Common myeloid progenitor, CD34-positive (primary cell): ENCODE measurements at regions of chr20 and their contacts with region 1.

Region 1: DNA sequence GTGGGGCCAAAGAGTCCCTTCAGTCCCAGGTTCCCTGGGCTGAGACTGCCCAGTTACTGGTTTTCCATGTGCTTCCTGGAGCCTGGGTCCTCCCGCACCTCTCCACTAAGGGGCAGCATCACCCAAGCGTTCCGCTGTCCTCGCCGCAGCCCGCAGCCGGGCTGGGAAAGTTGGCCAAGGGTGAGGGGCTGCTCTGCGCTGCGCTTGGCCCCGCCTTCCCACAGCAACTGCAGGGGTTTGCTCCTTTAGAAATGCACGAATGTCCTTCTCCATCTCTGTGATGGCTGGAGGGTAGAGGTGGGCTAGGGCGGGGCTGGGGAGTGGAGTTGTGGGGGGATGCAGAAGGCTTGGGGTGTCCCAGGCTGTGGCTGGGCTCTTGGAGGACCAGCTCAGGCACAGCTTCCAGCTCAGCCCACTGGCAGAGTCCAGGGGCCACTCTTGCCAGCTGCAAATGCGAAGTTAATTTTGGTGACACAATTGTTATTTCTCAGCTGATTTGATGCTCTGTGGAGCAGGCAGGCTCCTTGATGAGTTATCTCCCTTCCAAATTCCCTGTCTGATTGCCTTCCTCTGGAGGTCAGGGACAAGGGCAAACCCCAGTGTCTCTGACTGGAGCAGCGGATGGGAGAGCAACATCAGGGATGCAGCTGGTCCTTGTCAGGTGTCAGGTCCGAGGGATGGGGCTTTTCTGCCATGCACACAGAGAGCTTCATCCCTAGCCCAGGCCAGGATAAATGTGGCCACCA is 63.2 kb downstream of the NOL4L start:
- DNase-seq: peak in 2 of 3 donors; percentile 69 to 77
- H3K4me3 ChIP-seq: no peak overlapping the region
- H3K27ac ChIP-seq: no peak overlapping the region
- H3K4me1 ChIP-seq: peaks cover 0 to 72% (median 69%) of the 10 kb centered on the region in 4 experiments
- H3K27me3 ChIP-seq: no peaks in the 10 kb centered on the region

Region 2: DNA sequence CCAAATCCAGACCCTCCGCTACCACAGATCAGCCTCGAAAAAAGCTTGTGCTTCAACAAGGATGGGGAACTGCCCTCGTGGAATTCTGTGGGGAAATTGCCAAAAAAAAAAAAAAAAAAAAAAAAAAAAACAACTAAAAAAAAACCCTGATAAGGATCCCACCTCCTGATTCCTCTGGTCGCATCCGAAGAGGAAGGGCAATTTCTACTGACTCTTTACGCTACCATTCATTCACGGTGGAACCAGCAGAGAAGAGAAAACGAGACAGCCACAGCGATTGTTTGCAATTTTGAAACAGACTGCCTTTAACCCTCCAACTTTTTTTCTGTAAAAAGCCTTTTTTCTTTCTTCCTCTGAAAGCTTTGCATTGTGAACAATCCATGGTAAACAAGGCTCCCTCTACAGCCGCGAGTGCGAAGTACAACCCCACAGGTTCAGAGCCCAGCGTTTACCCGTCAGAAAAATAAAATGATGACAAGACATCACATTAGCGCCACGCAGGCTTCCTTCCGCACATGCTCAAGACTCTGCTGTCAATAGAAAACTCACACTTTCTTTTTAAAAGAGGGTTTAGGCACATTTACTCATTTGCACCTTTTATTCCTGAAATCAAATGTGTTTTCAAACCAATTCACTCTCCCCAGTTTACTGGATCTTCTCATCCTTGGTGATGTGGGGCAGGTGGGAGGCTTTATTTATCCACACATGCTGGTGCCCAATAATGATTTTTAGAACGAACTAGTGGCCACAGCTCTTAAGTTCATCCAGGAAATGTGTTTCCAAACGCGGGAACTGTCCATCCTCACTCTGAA is 36.8 kb before region 1 on chr20:
- CTCF ChIA-PET with region 1: interaction called, 11 read pairs
- POLR2A ChIA-PET with region 1: no interaction called
- DNase-seq: peak; percentile 84 to 93 (median 93)
- H3K4me3 ChIP-seq: peak overlapping the region; percentile 28 to 78 (median 65)
- H3K27ac ChIP-seq: peak overlapping the region in 1 of 2 experiments; percentile 49
- H3K4me1 ChIP-seq: peaks cover 0 to 44% (median 41%) of the 10 kb centered on the region in 4 experiments
- H3K27me3 ChIP-seq: no peaks in the 10 kb centered on the region

Region 3: GRCh38 chr20:32535953-32536823 is 14.2 kb after region 1 on chr20:
- CTCF ChIA-PET with region 1: interaction called, 255 read pairs
- POLR2A ChIA-PET with region 1: interaction called, 6 read pairs
- DNase-seq: peak in 2 of 3 donors; percentile 82 to 88
- H3K4me3 ChIP-seq: peak overlapping the region; percentile 27 to 73 (median 62)
- H3K27ac ChIP-seq: peak overlapping the region in 1 of 2 experiments; percentile 70
- H3K4me1 ChIP-seq: peaks cover 19 to 89% (median 79%) of the 10 kb centered on the region in 4 experiments
- H3K27me3 ChIP-seq: no peaks in the 10 kb centered on the region

Region 4: GRCh38 chr20:32574296-32575226 is 52.6 kb after region 1 on chr20:
- CTCF ChIA-PET with region 1: interaction called, 12 read pairs
- POLR2A ChIA-PET with region 1: no interaction called
- DNase-seq: peak; percentile 83 to 94 (median 94)
- H3K4me3 ChIP-seq: peak overlapping the region in 2 of 7 experiments; percentile 2 to 28
- H3K27ac ChIP-seq: peak overlapping the region in 1 of 2 experiments; percentile 56
- H3K4me1 ChIP-seq: peaks cover 0 to 92% (median 53%) of the 10 kb centered on the region in 4 experiments
- H3K27me3 ChIP-seq: no peaks in the 10 kb centered on the region

Region 5: DNA sequence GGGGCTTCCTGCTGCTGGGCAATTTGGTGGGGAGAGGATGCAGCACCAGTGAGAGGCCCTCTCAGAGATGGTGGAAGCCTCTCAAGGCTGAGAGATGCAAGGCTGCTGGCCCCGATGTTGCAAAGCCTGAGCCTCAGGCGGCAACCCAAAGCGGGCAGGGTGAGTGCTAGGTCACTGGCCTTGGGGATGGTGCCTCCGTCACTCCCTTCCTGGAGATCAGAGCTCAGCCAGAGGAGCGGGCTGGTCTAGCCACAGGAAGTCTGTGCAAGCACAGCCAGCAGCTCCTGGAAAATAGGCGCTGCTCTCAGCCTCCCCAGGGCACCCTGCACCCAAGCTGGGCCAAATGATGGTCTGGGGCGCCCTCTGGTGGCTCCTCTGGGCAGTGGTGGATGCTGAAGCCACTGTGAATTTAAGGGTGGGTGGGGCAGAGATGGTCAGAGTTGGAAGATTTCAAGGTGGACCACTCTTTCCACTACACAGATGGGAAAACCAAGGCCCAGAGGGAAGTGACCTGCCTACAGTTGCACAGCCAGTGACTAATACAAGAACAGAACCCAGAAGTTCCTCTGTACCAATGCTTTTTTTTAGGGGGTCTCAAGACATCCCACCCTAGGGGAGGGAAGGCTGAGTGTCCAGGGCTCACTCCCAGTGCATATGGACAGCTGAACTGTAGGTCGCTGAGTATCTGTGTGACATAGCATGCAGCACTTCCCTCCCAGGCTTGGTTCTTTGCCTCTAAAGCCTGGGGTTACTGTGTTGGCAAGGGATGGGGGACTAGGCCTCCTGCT is 131.0 kb after region 1 on chr20:
- CTCF ChIA-PET with region 1: interaction called, 669 read pairs
- POLR2A ChIA-PET with region 1: interaction called, 6 read pairs
- DNase-seq: peak; percentile 69 to 84 (median 80)
- H3K4me3 ChIP-seq: peak overlapping the region in 3 of 7 experiments; percentile 23 to 38 (median 33)
- H3K27ac ChIP-seq: no peak overlapping the region
- H3K4me1 ChIP-seq: peaks cover 3 to 55% (median 39%) of the 10 kb centered on the region in 4 experiments
- H3K27me3 ChIP-seq: no peaks in the 10 kb centered on the region

Region 6: GRCh38 chr20:32807706-32808105 is 285.8 kb after region 1 on chr20:
- CTCF ChIA-PET with region 1: no interaction called
- POLR2A ChIA-PET with region 1: no interaction called
- DNase-seq: no peak
- H3K4me3 ChIP-seq: no peak overlapping the region
- H3K27ac ChIP-seq: no peak overlapping the region
- H3K4me1 ChIP-seq: no peaks in the 10 kb centered on the region
- H3K27me3 ChIP-seq: no peaks in the 10 kb centered on the region